ENCODE measurements at regions of chr1 and their contacts with region 1.

Region 1: DNA sequence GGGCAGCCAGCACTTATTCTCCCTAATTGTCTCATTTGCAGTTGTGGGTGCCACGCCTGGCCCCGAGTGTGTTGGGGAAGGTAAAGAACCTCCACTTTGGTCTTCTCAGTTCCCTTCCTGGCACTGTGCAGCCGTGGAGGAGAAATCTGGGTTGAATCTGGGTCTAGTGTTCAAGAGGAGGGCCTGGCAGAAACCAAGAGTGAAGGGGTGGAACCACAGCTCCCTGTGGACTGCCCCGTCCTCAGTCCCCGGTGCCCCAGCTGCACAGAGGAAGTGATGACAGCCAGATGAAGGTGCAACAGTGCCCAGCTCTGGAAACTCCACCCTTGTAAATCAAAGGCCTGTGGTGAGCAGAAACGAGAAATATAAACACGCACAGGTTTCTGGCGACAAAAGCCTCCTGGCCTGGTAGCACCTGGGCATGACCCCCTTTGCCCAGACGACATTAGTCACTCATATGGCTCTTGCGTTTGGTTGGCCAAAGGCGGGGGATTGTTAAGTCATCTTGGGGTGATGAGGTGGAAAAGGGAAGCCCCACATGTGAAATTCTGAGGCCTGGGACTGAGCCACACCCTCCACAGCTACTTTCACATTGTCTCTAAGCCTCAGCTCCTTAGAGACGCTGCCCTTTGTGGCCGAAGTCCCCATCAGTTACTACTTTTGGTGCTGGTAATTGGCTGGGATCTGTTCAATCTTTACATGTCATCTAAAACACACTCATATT is 4.2 kb upstream of the ECE1 start:
- DNase-seq: peak; percentile 94
- H3K4me3 Mint-ChIP-seq: peak overlapping the region; percentile 88
- H3K27ac Mint-ChIP-seq: peak overlapping the region; percentile 98
- H3K4me1 Mint-ChIP-seq: peaks cover 73% of the 10 kb centered on the region
- H3K27me3 Mint-ChIP-seq: no peaks in the 10 kb centered on the region

Region 2: GRCh38 chr1:20786253-20787028 is 508.0 kb before region 1 on chr1:
- intact Hi-C with region 1: loop called (anchors 2 kb)
- DNase-seq: peak; percentile 99
- H3K4me3 Mint-ChIP-seq: peak overlapping the region; percentile 93
- H3K27ac Mint-ChIP-seq: peak overlapping the region; percentile 98
- H3K4me1 Mint-ChIP-seq: peaks cover 24% of the 10 kb centered on the region
- H3K27me3 Mint-ChIP-seq: peaks cover 6% of the 10 kb centered on the region

Region 3: DNA sequence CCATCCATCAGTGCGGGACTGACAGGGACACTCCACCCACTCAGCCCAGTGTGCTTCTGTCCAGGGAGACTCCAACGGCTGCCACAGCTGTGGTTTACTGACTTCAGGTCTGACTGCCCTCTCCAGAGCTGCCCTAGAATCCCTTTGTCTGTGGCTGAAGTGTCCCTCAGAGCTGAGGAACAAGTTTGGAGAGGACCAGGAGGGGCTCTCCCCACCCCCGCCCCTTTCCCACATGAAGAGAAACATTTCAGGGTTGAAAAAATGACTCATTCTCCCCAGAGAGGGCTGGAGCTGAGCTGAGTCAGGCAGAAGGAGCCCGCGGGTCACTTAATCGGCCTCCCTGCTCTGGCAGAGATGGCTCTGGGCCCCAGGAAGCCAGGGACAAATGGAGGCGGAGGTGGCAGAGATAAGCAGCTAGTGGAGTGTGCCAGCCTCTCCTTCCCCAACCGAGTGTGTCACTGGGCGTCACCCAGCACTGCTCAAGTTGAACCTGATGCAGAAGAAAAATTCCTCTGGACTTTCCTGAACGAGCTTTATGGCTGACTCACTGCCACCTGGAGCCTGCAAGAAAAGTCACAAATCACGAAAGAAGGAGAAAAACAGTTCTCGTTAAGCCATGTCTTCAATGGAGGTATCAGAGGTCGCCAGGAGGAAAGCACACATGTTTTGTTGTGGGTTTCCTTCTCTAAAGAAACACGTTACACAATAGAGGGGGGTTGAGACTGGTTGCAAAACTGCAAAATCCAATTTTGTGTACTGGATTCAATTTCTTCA is 30.1 kb after region 1 on chr1:
- intact Hi-C with region 1: loop called (anchors 1 kb)
- DNase-seq: peak; percentile 82
- H3K4me3 Mint-ChIP-seq: peak overlapping the region; percentile 79
- H3K27ac Mint-ChIP-seq: peak overlapping the region; percentile 94
- H3K4me1 Mint-ChIP-seq: peaks cover 71% of the 10 kb centered on the region
- H3K27me3 Mint-ChIP-seq: no peaks in the 10 kb centered on the region

Region 4: GRCh38 chr1:21344750-21345443 is 50.5 kb after region 1 on chr1:
- intact Hi-C with region 1: loop called (anchors 1 kb)
- DNase-seq: no peak
- H3K4me3 Mint-ChIP-seq: peak overlapping the region; percentile 88
- H3K27ac Mint-ChIP-seq: peak overlapping the region; percentile 85
- H3K4me1 Mint-ChIP-seq: peaks cover 39% of the 10 kb centered on the region
- H3K27me3 Mint-ChIP-seq: no peaks in the 10 kb centered on the region

Region 5: DNA sequence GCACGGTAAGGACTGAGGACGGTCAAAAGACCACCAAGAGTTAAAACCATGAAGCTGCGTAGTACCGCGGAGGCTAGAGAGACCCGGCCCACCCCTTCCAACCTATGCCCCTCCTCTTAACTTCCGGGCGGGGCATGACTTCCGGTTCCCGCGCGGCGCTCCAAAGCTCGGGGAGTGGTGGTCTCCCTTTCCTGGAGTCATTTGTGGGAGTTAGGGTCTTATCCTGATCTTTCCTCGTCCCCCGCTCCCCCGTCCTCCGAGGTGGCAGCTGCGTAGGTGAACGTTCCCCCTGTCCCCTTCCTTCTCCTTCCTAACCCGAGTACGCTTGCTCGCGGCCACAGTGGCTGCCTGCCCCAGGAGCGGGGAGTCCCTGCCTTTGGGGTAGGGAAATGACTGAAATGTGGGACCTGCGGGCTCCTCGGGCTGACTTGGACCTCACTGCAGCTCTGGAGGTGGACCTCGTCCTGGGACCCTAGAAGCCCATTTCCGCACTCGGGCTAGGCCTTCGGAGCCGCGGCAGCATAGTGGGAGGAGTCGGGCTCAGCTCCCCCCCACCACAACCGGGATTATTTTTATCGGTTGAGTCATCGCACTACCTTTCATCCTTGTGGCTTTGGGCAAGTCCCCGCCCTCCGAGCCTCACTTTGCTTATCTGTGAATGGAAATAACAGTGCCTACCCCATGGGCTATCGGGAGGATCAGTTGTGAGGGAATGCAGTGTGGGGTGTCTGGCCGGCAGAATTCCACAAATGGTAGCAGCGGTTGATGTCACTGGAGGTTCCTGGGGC is 731.1 kb after region 1 on chr1:
- intact Hi-C with region 1: loop called (anchors 10 kb)
- DNase-seq: peak; percentile 97
- H3K4me3 Mint-ChIP-seq: peak overlapping the region; percentile 90
- H3K27ac Mint-ChIP-seq: peak overlapping the region; percentile 100
- H3K4me1 Mint-ChIP-seq: peaks cover 48% of the 10 kb centered on the region
- H3K27me3 Mint-ChIP-seq: no peaks in the 10 kb centered on the region

Measured in activated CD4-positive, alpha-beta T cell treated with anti-CD3 and anti-CD28 coated beads, Interleukin-2, amount 10 ng/mL, durations not matched to agents 24 days and 14 days (primary cell).